Naive thymus-derived CD4-positive, alpha-beta T cell (primary cell): ENCODE measurements at regions of chr14 and their contacts with region 1.

Region 1: GRCh38 chr14:101737414-101738339 is 23.8 kb upstream of the PPP2R5C start:
- DNase-seq: peak in 4 of 9 donors; percentile 21 to 27 (median 24)
- ATAC-seq: peak; percentile 65
- H3K4me3 ChIP-seq: no peak overlapping the region
- H3K4me3 Mint-ChIP-seq: no peak overlapping the region
- H3K27ac ChIP-seq: no peak overlapping the region
- H3K27ac Mint-ChIP-seq: peak overlapping the region in 6 of 9 donors; percentile 20 to 76 (median 62)
- H3K4me1 ChIP-seq: peaks cover 1 to 14% of the 10 kb centered on the region in 2 donors
- H3K4me1 Mint-ChIP-seq: peaks cover 0 to 24% (median 12%) of the 10 kb centered on the region in 7 donors
- H3K27me3 ChIP-seq: no peaks in the 10 kb centered on the region
- H3K27me3 Mint-ChIP-seq: no peaks in the 10 kb centered on the region

Region 2: GRCh38 chr14:101666264-101666663 is 71.4 kb before region 1 on chr14:
- CTCF ChIA-PET with region 1: no interaction called
- POLR2A ChIA-PET with region 1: no interaction called
- intact Hi-C with region 1: no loop called
- DNase-seq: no peak
- ATAC-seq: no peak
- H3K4me3 ChIP-seq: no peak overlapping the region
- H3K4me3 Mint-ChIP-seq: no peak overlapping the region
- H3K27ac ChIP-seq: no peak overlapping the region
- H3K27ac Mint-ChIP-seq: no peak overlapping the region
- H3K4me1 ChIP-seq: no peaks in the 10 kb centered on the region
- H3K4me1 Mint-ChIP-seq: peaks cover 0 to 2% (median 0%) of the 10 kb centered on the region in 7 donors
- H3K27me3 ChIP-seq: no peaks in the 10 kb centered on the region
- H3K27me3 Mint-ChIP-seq: peaks cover 35 to 49% (median 39%) of the 10 kb centered on the region in 5 donors

Region 3: DNA sequence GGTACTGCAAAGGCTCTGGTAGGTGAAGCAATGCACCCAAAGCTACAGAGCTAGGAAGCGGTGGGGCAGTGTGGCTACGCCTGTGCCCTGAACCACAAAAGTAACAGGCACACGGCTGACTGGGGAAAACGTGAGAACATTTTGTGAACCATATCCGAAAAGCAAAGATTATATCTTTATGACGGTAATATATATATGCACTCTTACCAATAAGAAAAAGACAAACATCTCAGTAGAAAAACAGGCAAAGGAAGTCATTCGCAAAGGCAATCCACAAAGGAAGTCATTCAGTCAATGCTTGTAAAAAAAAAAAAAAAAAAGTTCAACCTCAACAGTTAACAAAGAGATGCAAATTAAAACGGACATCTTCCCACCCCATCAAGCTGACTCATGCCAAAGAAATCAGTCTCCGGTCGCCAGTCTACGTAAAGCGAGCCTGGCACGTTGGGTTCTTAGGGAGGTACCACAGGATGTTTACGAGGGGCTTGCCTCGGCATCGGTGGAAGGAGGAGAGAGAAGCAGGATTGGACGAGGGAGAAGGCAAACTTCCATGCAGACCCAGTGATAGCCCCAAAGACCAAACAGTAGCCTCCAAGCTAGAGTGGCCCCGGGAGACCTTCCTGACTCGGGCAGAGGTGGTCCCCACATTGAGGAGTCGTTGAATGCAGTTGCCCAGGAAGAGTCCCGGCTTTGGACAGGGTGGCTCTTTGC is 15.6 kb before region 1 on chr14:
- CTCF ChIA-PET with region 1: interaction called, 3 read pairs
- POLR2A ChIA-PET with region 1: interaction called, 34 read pairs
- intact Hi-C with region 1: loop called in 1 of 2 experiments (anchors 2 kb)
- DNase-seq: peak; percentile 49 to 93 (median 88)
- ATAC-seq: peak; percentile 86
- H3K4me3 ChIP-seq: peak overlapping the region; percentile 24
- H3K4me3 Mint-ChIP-seq: peak overlapping the region; percentile 73 to 92 (median 80)
- H3K27ac ChIP-seq: peak overlapping the region; percentile 76
- H3K27ac Mint-ChIP-seq: peak overlapping the region; percentile 92 to 99 (median 97)
- H3K4me1 ChIP-seq: peaks cover 34 to 50% of the 10 kb centered on the region in 2 donors
- H3K4me1 Mint-ChIP-seq: peaks cover 17 to 74% (median 52%) of the 10 kb centered on the region in 7 donors
- H3K27me3 ChIP-seq: no peaks in the 10 kb centered on the region
- H3K27me3 Mint-ChIP-seq: no peaks in the 10 kb centered on the region